ENCODE measurements at regions of chr14 and their contacts with region 1.

Region 1: DNA sequence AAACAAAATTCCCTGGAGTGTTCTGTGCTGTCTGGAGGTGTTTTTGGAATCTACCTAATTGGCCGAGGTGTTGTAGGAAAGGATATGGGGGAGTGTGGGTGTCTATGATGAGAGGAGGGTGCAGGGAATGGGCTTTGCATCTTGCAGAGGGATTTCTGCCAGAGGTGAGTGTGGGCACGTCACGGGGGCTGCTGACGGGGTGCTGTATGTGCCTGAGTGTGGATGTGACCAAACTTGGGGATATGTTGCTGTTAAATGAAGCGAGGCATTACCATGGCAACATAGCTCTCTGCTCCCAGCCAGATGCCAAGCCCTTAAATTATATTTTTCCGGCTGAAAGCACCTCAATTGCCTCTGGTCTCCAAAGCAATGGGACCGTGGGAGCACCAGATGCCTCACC is 44.3 kb upstream of the SPTLC2 start:
- DNase-seq: no peak
- H3K4me3 ChIP-seq: no peak overlapping the region
- H3K4me3 Mint-ChIP-seq: no peak overlapping the region
- H3K27ac Mint-ChIP-seq: no peak overlapping the region
- H3K4me1 ChIP-seq: no peaks in the 10 kb centered on the region
- H3K4me1 Mint-ChIP-seq: no peaks in the 10 kb centered on the region
- H3K27me3 ChIP-seq: no peaks in the 10 kb centered on the region
- H3K27me3 Mint-ChIP-seq: no peaks in the 10 kb centered on the region
- CTCF ChIP-seq: no peak

Region 2: DNA sequence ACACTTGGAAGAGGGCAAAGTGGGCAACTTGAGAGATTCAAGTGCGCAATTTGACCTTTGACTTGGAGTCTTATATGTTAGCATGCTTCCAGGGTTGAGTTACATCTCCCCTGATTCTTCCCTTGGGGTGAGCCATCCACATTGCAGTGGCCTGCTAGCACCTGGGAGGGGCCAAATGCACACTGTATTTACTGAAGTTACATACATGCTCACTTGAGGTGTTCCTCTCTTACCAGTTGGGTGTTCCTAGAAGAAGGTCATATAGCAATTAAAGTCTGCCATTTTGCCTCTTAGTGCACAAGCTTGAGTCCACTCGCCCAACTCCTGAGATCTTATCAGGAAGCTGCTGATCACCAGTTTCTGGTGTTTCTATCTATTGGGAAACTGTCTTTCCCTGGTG is 30.6 kb before region 1 on chr14:
- CTCF ChIA-PET with region 1: no interaction called
- POLR2A ChIA-PET with region 1: no interaction called
- intact Hi-C with region 1: no loop called
- DNase-seq: no peak
- H3K4me3 ChIP-seq: no peak overlapping the region
- H3K4me3 Mint-ChIP-seq: no peak overlapping the region
- H3K27ac Mint-ChIP-seq: no peak overlapping the region
- H3K4me1 ChIP-seq: no peaks in the 10 kb centered on the region
- H3K4me1 Mint-ChIP-seq: no peaks in the 10 kb centered on the region
- H3K27me3 ChIP-seq: no peaks in the 10 kb centered on the region
- H3K27me3 Mint-ChIP-seq: no peaks in the 10 kb centered on the region
- CTCF ChIP-seq: no peak

Region 3: GRCh38 chr14:77707724-77708408 is 47.1 kb after region 1 on chr14 and contains the starts of genes ALKBH1 and SLIRP:
- CTCF ChIA-PET with region 1: no interaction called
- POLR2A ChIA-PET with region 1: interaction called, 4 read pairs
- intact Hi-C with region 1: loop called (anchors 1 kb)
- DNase-seq: peak; percentile 83 to 87
- H3K4me3 ChIP-seq: peak within 1 kb of the TSS; percentile 71
- H3K4me3 Mint-ChIP-seq: peak within 1 kb of the TSS; percentile 86
- H3K27ac Mint-ChIP-seq: peak within 1 kb of the TSS; percentile 77
- H3K4me1 ChIP-seq: peaks cover 8% of the 10 kb centered on the region; the same call in 1 of the 2 replicates
- H3K4me1 Mint-ChIP-seq: peaks cover 17% of the 10 kb centered on the region
- H3K27me3 ChIP-seq: no peaks in the 10 kb centered on the region
- H3K27me3 Mint-ChIP-seq: no peaks in the 10 kb centered on the region
- CTCF ChIP-seq: no peak
- total RNA-seq, gene ALKBH1: 17.1 and 18.7 TPM in 2 replicates
- total RNA-seq, gene SLIRP: 204 and 208 TPM in 2 replicates

Region 4: DNA sequence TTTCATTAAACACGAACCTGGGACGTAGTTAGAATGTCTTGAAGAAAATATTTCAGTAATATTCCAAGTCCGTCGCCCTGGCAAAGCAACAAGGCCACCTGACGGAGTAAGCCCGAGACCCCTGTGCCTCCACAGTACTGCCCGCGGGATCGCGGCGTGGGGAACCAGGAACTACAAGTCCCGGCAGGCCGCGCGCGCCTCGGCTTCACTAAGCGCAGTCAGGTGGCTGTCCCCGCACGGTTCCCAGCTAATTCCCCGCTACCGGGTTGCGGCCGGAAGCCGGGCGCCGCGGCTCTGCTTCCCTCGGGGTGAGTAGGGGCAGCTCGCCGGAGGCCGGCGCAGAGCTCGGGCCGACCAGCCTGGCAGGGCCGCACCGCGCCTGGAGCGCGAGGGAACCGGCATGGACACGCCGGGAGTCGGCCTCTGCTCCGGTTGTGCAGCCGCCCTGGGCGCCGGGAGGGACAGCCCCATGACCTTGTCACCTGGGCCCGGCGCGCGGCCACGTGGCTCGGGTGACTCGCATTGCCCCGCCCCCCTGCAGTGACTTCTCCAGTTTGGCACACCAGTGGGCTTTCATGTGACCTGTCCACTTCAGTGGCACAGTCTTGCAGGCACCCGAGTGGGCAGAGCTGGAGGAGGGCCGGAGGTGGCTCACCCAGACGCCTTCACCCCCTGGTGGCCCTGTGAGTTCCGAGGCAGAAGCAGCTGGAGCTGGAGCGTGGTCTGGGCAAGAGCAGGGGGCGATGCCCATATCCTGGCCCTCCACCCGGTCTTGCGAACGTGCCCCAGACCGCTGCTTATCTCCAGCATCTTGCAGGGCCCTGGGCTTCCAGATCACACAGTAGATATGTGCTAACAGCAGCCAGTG is 139.3 kb after region 1 on chr14 and contains the start of gene ADCK1:
- CTCF ChIA-PET with region 1: interaction called, 4 read pairs
- POLR2A ChIA-PET with region 1: no interaction called
- intact Hi-C with region 1: loop called (anchors 5 kb)
- DNase-seq: peak; percentile 87 to 88
- H3K4me3 ChIP-seq: peak within 1 kb of the TSS; percentile 70
- H3K4me3 Mint-ChIP-seq: peak within 1 kb of the TSS; percentile 83
- H3K27ac Mint-ChIP-seq: peak within 1 kb of the TSS; percentile 86
- H3K4me1 ChIP-seq: peaks cover 24% of the 10 kb centered on the region
- H3K4me1 Mint-ChIP-seq: peaks cover 7% of the 10 kb centered on the region
- H3K27me3 ChIP-seq: no peaks in the 10 kb centered on the region
- H3K27me3 Mint-ChIP-seq: no peaks in the 10 kb centered on the region
- CTCF ChIP-seq: peak; percentile 32 to 51
- total RNA-seq, gene ADCK1: 8.8 and 9.7 TPM in 2 replicates

Region 5: GRCh38 chr14:77812028-77812427 is 151.3 kb after region 1 on chr14:
- CTCF ChIA-PET with region 1: no interaction called
- POLR2A ChIA-PET with region 1: no interaction called
- intact Hi-C with region 1: loop called (anchors 1 kb)
- DNase-seq: no peak
- H3K4me3 ChIP-seq: no peak overlapping the region
- H3K4me3 Mint-ChIP-seq: no peak overlapping the region
- H3K27ac Mint-ChIP-seq: no peak overlapping the region
- H3K4me1 ChIP-seq: no peaks in the 10 kb centered on the region
- H3K4me1 Mint-ChIP-seq: no peaks in the 10 kb centered on the region
- H3K27me3 ChIP-seq: no peaks in the 10 kb centered on the region
- H3K27me3 Mint-ChIP-seq: no peaks in the 10 kb centered on the region
- CTCF ChIP-seq: no peak

Region 6: GRCh38 chr14:77862154-77862786 is 201.5 kb after region 1 on chr14:
- CTCF ChIA-PET with region 1: no interaction called
- POLR2A ChIA-PET with region 1: no interaction called
- intact Hi-C with region 1: loop called (anchors 1 kb)
- DNase-seq: peak; percentile 75 to 81
- H3K4me3 ChIP-seq: no peak overlapping the region
- H3K4me3 Mint-ChIP-seq: no peak overlapping the region
- H3K27ac Mint-ChIP-seq: no peak overlapping the region
- H3K4me1 ChIP-seq: no peaks in the 10 kb centered on the region
- H3K4me1 Mint-ChIP-seq: peaks cover 7% of the 10 kb centered on the region
- H3K27me3 ChIP-seq: no peaks in the 10 kb centered on the region
- H3K27me3 Mint-ChIP-seq: no peaks in the 10 kb centered on the region
- CTCF ChIP-seq: peak; percentile 91 to 95

Region 7: GRCh38 chr14:78598041-78598920 is 937.5 kb after region 1 on chr14:
- CTCF ChIA-PET with region 1: no interaction called
- POLR2A ChIA-PET with region 1: no interaction called
- intact Hi-C with region 1: loop called (anchors 5 kb)
- DNase-seq: peak; percentile 51 to 63
- H3K4me3 ChIP-seq: no peak overlapping the region
- H3K4me3 Mint-ChIP-seq: no peak overlapping the region
- H3K27ac Mint-ChIP-seq: no peak overlapping the region
- H3K4me1 ChIP-seq: no peaks in the 10 kb centered on the region
- H3K4me1 Mint-ChIP-seq: no peaks in the 10 kb centered on the region
- H3K27me3 ChIP-seq: no peaks in the 10 kb centered on the region
- H3K27me3 Mint-ChIP-seq: peaks cover 13% of the 10 kb centered on the region
- CTCF ChIP-seq: peak; percentile 78 to 93

Measured in Caco-2 (cell line).